IMR-90 (cell line): ENCODE measurements at regions of chr11 and their contacts with region 1.

Region 1: DNA sequence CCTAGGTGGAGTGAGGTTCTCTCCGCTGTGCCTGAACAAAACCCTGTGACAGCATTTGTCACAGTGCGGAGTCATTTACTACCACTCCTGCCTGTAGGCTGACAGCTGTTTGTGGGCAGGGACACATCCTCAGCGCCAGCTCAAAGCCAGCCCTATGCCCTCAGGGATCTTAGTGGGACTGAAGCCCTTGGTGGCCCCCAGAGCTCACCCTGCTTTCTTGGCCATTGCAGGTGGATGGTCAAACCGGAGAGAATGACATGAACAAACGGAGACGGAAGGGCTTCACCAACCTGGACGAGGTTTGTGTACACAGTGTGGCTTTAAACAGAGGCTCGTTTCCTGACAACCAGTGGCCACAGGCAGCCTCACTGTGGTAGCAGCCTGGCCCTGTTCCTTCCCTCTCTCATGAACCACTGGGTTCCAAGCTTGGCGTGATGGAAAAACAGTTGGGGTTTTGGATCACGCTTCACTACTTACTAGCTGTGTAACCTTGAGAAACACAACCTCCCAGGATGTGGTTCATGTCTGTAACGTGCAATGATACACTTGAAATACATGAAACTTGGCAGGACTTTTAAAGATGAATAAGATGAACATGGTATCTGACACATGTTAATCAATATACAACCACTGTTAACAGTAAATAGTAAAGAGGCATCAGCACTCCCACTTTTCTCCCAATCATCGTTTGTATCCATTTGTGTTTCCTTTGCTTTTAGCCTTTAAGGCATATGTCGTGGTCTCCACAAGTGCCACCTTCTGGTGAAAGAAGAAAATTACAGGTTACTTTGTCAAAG is 125.8 kb downstream of the MICAL2 start:
- DNase-seq: peak; percentile 72
- ATAC-seq: peak; percentile 61
- H3K4me3 ChIP-seq: no peak overlapping the region
- H3K27ac ChIP-seq: peak overlapping the region; percentile 62
- H3K4me1 ChIP-seq: peaks cover 7% of the 10 kb centered on the region
- H3K27me3 ChIP-seq: no peaks in the 10 kb centered on the region
- CTCF ChIP-seq: peak; percentile 68
- POLR2A ChIP-seq: no peak
- RAD21 ChIP-seq: peak; percentile 76

Region 2: DNA sequence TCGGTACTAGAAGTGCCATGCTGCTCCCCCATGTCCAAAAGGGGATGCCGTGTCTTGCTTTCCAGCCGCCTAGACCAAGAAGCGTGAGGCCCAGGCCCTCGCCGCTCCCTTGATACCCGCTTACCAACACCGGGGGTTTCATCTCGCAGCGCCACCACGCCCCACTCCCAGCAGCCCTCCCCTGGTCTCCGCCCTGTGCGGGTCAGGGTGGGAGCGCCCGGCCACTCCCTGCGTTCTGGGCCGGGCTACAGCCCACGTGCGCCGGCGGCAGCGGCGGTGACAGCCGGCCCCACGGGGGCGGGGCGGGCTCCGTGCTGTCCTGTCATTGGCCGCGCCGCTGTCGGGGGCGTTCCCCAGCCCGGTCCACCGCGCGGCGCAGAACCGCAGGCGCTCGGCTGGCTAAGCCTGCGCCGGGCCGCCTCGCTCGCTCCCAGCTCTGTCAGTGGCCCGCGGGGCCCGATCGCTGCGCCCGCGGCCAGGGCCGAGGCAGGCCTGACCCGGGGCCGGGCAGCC is 125.9 kb before region 1 on chr11 and contains the start of gene MICAL2:
- CTCF ChIA-PET with region 1: no interaction called
- POLR2A ChIA-PET with region 1: interaction called, 3 read pairs
- dilution Hi-C with region 1: no loop called
- in situ Hi-C with region 1: loop called (anchors 10 kb)
- intact Hi-C with region 1: loop called (anchors 1 kb)
- DNase-seq: peak; percentile 85
- ATAC-seq: peak; percentile 93
- H3K4me3 ChIP-seq: peak within 1 kb of the TSS; percentile 80
- H3K27ac ChIP-seq: peak within 1 kb of the TSS; percentile 71
- H3K4me1 ChIP-seq: peaks cover 30% of the 10 kb centered on the region
- H3K27me3 ChIP-seq: no peaks in the 10 kb centered on the region
- CTCF ChIP-seq: no peak
- POLR2A ChIP-seq: peak; percentile 90
- RAD21 ChIP-seq: no peak
- total RNA-seq, gene MICAL2: 285 and 336 TPM in 2 replicates

Region 3: DNA sequence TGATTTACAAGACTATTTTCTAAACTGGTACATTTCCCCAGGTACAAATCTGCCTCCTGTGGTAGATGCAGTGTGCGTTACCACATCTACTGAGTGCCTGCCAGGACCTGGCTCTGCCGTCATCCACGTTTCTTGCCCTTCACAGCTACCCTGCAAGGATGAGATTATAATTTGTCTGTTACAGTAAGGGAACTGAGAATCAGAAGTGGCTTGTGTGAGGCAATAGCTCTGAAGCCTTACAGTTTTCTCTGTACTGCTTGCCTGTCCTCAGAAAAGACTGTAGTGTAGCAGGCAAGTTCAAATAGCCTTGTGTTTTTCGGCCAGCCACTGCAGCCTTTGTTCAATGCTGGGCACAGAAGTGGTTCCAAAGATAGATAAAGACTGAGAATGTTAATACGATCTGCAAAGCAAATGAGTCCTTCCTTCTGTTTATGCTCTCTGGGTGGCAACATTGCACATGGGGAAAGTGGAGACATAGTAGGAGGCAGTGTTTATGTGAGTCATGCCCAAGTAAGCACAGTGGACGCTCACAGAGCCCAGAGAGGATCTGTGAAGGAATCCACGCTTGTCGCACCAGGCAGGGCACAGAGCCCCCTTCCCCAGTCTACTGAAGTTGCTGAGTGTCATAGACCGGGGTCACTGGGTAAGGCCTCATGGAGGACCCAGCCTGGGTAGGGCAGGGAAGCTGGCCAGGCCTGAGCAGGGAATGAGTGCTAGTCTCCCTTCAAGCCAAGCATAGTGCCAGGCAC is 76.6 kb before region 1 on chr11:
- CTCF ChIA-PET with region 1: no interaction called
- POLR2A ChIA-PET with region 1: no interaction called
- dilution Hi-C with region 1: no loop called
- in situ Hi-C with region 1: no loop called
- intact Hi-C with region 1: loop called (anchors 5 kb)
- DNase-seq: peak; percentile 97
- ATAC-seq: peak; percentile 82
- H3K4me3 ChIP-seq: no peak overlapping the region
- H3K27ac ChIP-seq: peak overlapping the region; percentile 83
- H3K4me1 ChIP-seq: peaks cover 53% of the 10 kb centered on the region
- H3K27me3 ChIP-seq: no peaks in the 10 kb centered on the region
- CTCF ChIP-seq: peak; percentile 32; the same call in 1 of the 2 replicates
- POLR2A ChIP-seq: peak; percentile 76
- RAD21 ChIP-seq: peak; percentile 55

Region 4: DNA sequence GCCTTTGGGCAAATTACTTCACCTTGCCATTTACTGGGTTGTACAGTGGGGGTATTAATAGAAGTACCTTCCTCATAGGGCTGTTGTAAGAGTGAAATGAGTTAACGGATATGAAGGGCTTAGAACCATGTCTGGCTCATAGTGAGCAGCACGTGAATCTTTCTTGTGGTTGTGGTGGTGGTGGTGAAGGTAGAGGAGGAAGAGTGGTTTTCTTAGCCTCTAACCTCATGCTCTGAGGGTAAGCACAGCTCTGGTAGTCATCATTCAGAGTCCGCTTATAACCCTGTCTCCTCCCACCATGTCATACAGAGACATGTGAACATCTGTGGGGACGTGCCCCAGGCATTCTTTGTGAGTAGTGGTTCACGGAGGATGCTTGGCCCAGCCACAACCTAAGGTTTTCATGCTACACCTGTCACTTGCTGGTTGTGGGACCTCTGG is 481.7 kb after region 1 on chr11:
- CTCF ChIA-PET with region 1: no interaction called
- POLR2A ChIA-PET with region 1: no interaction called
- dilution Hi-C with region 1: no loop called
- in situ Hi-C with region 1: no loop called
- intact Hi-C with region 1: no loop called
- DNase-seq: no peak
- ATAC-seq: no peak
- H3K4me3 ChIP-seq: no peak overlapping the region
- H3K27ac ChIP-seq: no peak overlapping the region
- H3K4me1 ChIP-seq: peaks cover 40% of the 10 kb centered on the region
- H3K27me3 ChIP-seq: no peaks in the 10 kb centered on the region
- CTCF ChIP-seq: no peak
- POLR2A ChIP-seq: no peak
- RAD21 ChIP-seq: no peak